Calu3 (cell line): ENCODE measurements at regions of chr3 and their contacts with region 1.

Region 1: DNA sequence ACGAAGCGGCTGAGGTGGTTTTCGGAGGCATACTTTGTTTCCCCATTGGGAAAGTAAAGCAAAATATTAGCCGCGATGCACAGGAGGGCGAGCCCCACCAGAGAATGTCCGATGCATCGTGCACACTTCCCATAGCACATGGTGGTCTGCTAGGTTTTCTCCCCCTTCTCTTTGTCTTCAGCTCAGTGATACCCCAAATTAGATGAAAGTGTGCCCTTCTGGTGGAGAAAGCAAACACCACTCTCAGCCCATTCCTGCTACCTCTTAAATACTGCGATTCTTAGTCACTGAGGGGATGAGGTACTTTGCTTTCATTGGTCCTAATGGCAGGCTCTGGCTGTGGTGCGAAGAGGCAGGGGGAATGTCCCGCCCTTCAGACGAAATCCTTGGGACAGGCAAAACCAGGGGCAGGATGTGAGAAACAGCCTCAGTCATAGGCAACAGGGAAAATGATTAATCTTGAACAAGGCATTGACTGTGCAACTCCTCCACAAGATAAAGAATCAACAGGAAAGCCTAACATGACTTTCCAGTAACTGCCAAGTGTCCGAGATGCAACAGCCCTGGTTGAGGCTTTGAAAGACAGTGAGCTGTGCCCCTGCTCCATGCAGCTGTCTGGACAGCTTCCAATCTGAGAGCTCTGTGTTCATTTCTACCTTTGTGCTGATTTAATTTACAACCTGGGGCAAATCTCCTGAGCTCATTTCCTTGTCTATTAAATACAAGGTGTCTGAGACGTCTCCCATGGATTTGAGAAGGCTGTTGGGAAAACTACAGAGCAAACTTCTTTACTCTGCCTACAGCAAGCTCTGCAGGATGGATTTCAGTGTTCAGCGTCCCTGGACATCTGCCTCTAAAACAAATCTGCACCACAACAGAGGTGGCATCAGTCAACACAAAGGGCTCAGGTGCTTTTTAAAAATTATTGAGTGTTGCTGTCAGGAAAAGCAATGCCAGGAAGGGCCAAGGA is at the start of gene TM4SF1:
- DNase-seq: peak; percentile 97
- H3K4me3 Mint-ChIP-seq: peak within 1 kb of the TSS; percentile 75
- H3K27ac Mint-ChIP-seq: peak within 1 kb of the TSS; percentile 95
- H3K4me1 Mint-ChIP-seq: peaks cover 57% of the 10 kb centered on the region
- H3K27me3 Mint-ChIP-seq: no peaks in the 10 kb centered on the region
- CTCF ChIP-seq: peak; percentile 19
- total RNA-seq, gene TM4SF1: 919 and 981 TPM in 2 replicates

Region 2: GRCh38 chr3:149366941-149367840 is 10.5 kb before region 1 on chr3:
- CTCF ChIA-PET with region 1: interaction called, 11 read pairs
- intact Hi-C with region 1: loop called (anchors 1 kb)
- DNase-seq: peak; percentile 92
- H3K4me3 Mint-ChIP-seq: peak overlapping the region; percentile 54
- H3K27ac Mint-ChIP-seq: peak overlapping the region; percentile 99
- H3K4me1 Mint-ChIP-seq: peaks cover 67% of the 10 kb centered on the region
- H3K27me3 Mint-ChIP-seq: peaks cover 8% of the 10 kb centered on the region
- CTCF ChIP-seq: no peak

Region 3: DNA sequence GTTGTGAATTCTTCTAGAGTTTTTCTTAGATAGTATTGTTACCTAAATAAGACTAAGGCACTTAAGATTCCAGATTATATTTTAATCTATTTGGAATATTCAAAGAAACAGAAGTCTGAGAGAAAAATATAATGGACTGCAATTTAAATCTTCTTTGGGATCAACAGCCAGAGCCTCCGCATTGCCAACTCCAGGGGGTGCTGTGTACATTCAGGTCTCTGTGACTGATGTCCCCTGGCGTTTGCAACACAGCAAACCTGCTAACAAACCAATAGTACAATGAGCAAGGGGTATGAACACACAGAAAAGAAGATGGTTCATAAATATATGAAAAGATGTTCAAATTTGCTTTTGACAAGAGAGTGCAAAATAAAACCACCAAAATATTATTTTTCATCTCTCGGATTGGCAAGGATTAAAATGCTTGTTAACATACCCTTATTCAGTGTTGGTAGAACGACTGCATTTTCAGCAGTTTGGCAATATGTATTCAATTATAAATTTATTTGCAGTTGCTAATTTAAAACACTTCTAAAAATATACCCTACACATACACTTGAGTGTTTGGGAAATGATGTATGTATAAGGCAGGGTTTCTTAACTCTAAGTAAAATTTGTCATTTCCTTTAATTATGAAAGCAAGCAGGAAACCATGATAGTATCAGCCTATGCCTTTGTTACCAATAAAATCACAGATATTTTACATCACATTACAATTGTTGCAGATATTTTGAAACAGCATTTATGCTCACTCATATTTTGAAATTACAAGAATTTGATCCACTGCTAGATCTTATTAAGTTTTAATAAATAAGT is 15.9 kb after region 1 on chr3:
- CTCF ChIA-PET with region 1: interaction called, 23 read pairs
- intact Hi-C with region 1: no loop called
- DNase-seq: peak; percentile 93
- H3K4me3 Mint-ChIP-seq: no peak overlapping the region
- H3K27ac Mint-ChIP-seq: peak overlapping the region; percentile 40
- H3K4me1 Mint-ChIP-seq: peaks cover 84% of the 10 kb centered on the region
- H3K27me3 Mint-ChIP-seq: no peaks in the 10 kb centered on the region
- CTCF ChIP-seq: peak; percentile 99

Region 4: GRCh38 chr3:149401215-149401925 is 23.7 kb after region 1 on chr3:
- CTCF ChIA-PET with region 1: interaction called, 12 read pairs
- intact Hi-C with region 1: loop called (anchors 2 kb)
- DNase-seq: peak; percentile 86
- H3K4me3 Mint-ChIP-seq: peak overlapping the region; percentile 37
- H3K27ac Mint-ChIP-seq: peak overlapping the region; percentile 91
- H3K4me1 Mint-ChIP-seq: peaks cover 84% of the 10 kb centered on the region
- H3K27me3 Mint-ChIP-seq: no peaks in the 10 kb centered on the region
- CTCF ChIP-seq: no peak